Lower leg skin (tissue), 4 donors: ENCODE measurements at regions of chr12 and their contacts with region 1.

Region 1: GRCh38 chr12:1594261-1595025 is at the start of gene FBXL14:
- DNase-seq: peak; percentile 84 to 97
- H3K4me3 ChIP-seq: peak within 1 kb of the TSS; percentile 75
- CTCF ChIP-seq: no peak
- POLR2A ChIP-seq: no peak
- total RNA-seq, gene FBXL14: 9.3 to 12.8 (median 10.9) TPM

Region 2: DNA sequence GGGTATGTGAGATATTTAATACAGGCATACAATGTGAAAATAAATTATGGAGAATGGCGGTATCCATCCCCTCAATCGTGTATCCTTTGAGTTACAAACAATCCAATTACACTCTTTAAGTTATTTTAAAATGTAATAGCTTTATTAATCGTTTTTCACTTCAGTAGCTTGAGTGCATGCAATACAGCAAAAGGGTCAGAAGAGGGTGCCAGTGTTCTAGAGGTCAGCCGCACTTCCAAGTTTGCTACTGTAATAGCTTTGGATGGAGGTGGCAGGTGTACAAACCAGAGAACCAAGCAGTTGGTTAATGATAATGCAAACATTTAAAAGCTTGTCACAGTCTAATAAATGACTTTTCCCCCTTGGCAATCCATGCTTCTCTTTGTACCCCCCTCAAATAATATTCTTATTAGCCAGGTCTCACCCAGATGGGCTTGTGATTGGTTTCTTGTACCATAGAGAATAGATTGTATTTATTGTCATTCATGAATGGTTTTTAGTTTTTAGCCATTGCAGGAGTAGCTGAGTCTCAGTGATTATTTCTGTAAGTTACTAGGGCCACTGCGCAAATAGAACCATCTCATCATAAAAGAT is 476.4 kb before region 1 on chr12:
- intact Hi-C with region 1: loop called (anchors 5 kb)
- DNase-seq: peak; percentile 77 to 93
- H3K4me3 ChIP-seq: no peak overlapping the region
- CTCF ChIP-seq: peak in 1 of 3 donors; percentile 62
- POLR2A ChIP-seq: no peak

Region 3: DNA sequence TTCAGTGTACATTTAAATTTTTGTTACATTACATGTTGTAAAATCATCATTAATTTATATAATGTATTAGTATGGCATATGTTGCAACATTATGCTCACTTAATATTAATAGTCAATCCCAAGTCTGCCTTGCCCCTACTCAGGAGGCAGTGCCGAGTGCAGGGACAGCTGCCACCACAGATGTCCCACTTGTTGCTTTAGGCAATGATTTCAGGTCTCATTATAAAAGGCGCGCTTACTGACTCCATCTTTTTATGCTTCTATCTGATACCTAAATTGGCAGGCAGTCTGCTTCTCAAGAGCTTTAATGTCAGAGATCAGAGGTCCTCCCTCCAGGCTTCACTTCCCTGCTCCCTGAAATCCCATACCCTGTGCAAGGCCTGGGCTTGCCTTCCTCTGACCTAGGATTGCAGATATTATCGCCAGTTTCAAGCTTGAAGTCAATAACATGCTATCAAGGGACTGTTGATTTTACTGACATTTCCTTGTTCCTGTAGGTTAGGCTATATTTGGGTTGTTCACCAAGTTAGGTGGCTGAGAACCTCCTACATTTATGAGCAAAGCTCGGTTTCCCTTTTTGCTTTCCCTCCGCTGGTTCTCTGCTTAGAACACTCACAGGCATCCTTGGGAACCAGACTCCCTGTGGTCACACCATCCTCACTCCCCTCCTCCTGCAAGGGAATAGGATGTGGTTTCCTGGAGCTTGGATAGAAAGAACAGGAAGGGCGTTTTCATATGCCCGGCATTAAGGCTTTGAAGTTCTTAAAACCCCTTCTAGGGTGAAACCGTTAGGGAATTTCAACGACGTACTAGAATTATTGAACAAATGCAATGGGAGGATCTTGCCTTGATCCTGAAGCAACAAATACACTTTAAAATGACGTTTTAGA is 992.0 kb after region 1 on chr12:
- intact Hi-C with region 1: no loop called
- DNase-seq: no peak
- H3K4me3 ChIP-seq: no peak overlapping the region
- CTCF ChIP-seq: no peak
- POLR2A ChIP-seq: no peak